ENCODE measurements at regions of chr5 and their contacts with region 1.

Region 1: GRCh38 chr5:57298295-57298984 is 124.6 kb downstream of the GPBP1 start:
- DNase-seq: peak; percentile 77 to 94 (median 89)
- H3K4me3 ChIP-seq: peak overlapping the region in 1 of 4 donors; percentile 12
- H3K27ac ChIP-seq: no peak overlapping the region
- H3K4me1 ChIP-seq: peaks cover 0 to 6% of the 10 kb centered on the region in 2 donors
- H3K27me3 ChIP-seq: no peaks in the 10 kb centered on the region
- CTCF ChIP-seq: peak; percentile 67 to 90 (median 75)
- POLR2A ChIP-seq: no peak

Region 2: DNA sequence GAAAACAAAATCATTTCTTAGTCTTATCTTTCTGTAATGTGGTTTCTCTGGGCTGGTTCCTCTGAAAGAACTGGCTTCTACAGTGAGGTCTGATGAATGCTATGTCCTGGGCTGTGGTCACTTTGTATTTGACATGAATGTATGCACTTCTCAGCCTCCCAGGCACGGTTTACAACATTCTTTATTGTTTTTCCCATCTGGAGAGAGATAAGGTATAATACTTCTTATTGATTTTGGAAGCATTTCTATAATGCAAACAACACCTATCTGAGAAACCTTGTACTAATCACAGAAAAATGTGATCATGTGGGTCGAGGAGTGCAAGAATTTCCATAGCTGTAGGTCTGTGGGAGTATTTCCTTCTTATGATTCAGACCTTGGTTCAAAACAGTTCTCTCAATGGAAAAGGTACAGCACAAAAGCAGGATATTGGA is 137.3 kb after region 1 on chr5:
- intact Hi-C with region 1: loop called (anchors 5 to 10 kb)
- DNase-seq: no peak
- H3K4me3 ChIP-seq: no peak overlapping the region
- H3K27ac ChIP-seq: no peak overlapping the region
- H3K4me1 ChIP-seq: peaks cover 0 to 3% of the 10 kb centered on the region in 2 donors
- H3K27me3 ChIP-seq: no peaks in the 10 kb centered on the region
- CTCF ChIP-seq: no peak
- POLR2A ChIP-seq: no peak

Region 3: GRCh38 chr5:57499262-57500050 is 201.0 kb after region 1 on chr5:
- intact Hi-C with region 1: loop called in 1 of 2 experiments (anchors 10 kb)
- DNase-seq: peak in 1 of 7 donors; percentile 11
- H3K4me3 ChIP-seq: peak overlapping the region in 1 of 4 donors; percentile 33
- H3K27ac ChIP-seq: no peak overlapping the region
- H3K4me1 ChIP-seq: peaks cover 7 to 46% of the 10 kb centered on the region in 2 donors
- H3K27me3 ChIP-seq: no peaks in the 10 kb centered on the region
- CTCF ChIP-seq: peak; percentile 44 to 79 (median 68)
- POLR2A ChIP-seq: no peak

Region 4: GRCh38 chr5:57779383-57780223 is 481.2 kb after region 1 on chr5:
- intact Hi-C with region 1: loop called in 1 of 2 experiments (anchors 10 kb)
- DNase-seq: peak; percentile 18 to 73 (median 43)
- H3K4me3 ChIP-seq: no peak overlapping the region
- H3K27ac ChIP-seq: no peak overlapping the region
- H3K4me1 ChIP-seq: peaks cover 0 to 14% of the 10 kb centered on the region in 2 donors
- H3K27me3 ChIP-seq: no peaks in the 10 kb centered on the region
- CTCF ChIP-seq: peak; percentile 19 to 68 (median 59)
- POLR2A ChIP-seq: no peak

Region 5: DNA sequence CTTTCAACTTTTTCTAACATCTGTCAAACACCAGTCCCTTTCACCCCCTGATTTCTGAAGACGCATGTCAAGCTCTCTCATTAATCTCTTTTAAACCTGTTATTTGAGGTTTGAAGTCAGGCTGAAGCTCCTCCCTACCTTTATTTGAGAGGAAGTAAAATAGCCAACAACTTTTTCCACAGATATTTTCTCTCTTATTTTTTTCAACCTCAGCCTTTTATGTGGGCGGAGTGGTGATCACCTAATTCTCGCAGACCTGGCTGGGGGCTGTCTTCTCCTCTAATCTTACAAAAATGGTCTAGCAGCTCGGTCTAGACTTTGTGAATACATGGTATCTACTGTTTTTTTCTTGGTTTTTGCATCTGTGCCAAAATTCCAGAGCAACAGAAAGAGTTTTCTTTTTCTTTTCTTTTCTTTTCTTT is 579.9 kb after region 1 on chr5:
- intact Hi-C with region 1: loop called in 1 of 2 experiments (anchors 10 kb)
- DNase-seq: no peak
- H3K4me3 ChIP-seq: no peak overlapping the region
- H3K27ac ChIP-seq: no peak overlapping the region
- H3K4me1 ChIP-seq: no peaks in the 10 kb centered on the region
- H3K27me3 ChIP-seq: no peaks in the 10 kb centered on the region
- CTCF ChIP-seq: no peak
- POLR2A ChIP-seq: no peak

Measured in adrenal gland (tissue), 19 donors.